ENCODE measurements at regions of chr15 and their contacts with region 1.

Region 1: DNA sequence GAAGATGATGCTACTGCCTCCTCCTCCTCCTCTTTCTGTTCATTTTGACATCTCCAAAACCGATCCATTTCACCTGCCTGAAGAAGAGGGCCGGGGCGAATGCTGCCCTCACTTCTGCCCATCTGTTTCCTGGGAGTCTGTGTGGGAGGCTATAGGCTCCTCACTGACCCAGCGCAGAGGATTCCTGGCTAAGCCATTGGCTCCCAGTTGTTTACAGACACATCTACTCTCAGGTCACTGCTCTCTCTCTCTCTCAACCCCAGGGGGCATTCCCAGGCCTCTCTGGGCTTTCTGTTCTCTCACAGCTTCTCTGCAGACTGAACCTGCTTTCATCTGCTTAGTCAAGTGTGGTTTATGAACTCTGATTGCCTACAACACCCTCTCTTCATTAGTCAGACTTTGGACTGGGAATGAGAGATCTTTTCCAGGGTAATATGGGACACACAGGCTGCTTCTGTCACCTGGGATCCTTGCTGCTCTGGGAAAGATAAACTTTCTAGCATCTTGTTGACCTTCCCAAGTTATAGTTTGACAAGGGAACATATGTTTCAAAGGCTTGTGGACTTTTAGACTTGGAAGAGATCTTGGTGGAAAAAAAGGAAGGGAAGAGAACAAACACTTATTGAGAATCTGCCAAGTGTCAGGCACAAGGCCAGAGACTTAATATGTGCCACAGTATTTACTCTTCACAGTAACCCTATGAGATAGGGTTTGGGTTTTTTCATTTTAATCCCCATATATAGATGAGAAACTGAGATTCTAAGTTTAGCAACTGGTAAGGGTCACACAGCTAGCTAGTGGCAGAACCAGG is 30.2 kb upstream of the USP3 start:
- DNase-seq: peak in 32 of 35 experiments; percentile 28 to 78 (median 46)
- ATAC-seq: peak; percentile 73 to 80 (median 78)
- H3K4me3 ChIP-seq: no peak overlapping the region
- H3K4me3 Mint-ChIP-seq: peak overlapping the region; percentile 4 to 56 (median 13)
- H3K27ac ChIP-seq: peak overlapping the region; percentile 63
- H3K27ac Mint-ChIP-seq: peak overlapping the region; percentile 95
- H3K4me1 ChIP-seq: peaks cover 27 to 38% of the 10 kb centered on the region in 2 experiments
- H3K4me1 Mint-ChIP-seq: peaks cover 65 to 69% (median 68%) of the 10 kb centered on the region in 3 donors
- H3K27me3 ChIP-seq: no peaks in the 10 kb centered on the region
- H3K27me3 Mint-ChIP-seq: no peaks in the 10 kb centered on the region

Region 2: GRCh38 chr15:63255489-63255990 is 218.7 kb before region 1 on chr15:
- CTCF ChIA-PET with region 1: no interaction called
- POLR2A ChIA-PET with region 1: interaction called in 1 of 2 experiments, 11 read pairs
- DNase-seq: no peak
- ATAC-seq: no peak
- H3K4me3 ChIP-seq: no peak overlapping the region
- H3K4me3 Mint-ChIP-seq: no peak overlapping the region
- H3K27ac ChIP-seq: no peak overlapping the region
- H3K27ac Mint-ChIP-seq: peak overlapping the region; percentile 69 to 86
- H3K4me1 ChIP-seq: no peaks in the 10 kb centered on the region
- H3K4me1 Mint-ChIP-seq: peaks cover 13 to 20% (median 16%) of the 10 kb centered on the region in 3 donors
- H3K27me3 ChIP-seq: no peaks in the 10 kb centered on the region
- H3K27me3 Mint-ChIP-seq: no peaks in the 10 kb centered on the region

Region 3: DNA sequence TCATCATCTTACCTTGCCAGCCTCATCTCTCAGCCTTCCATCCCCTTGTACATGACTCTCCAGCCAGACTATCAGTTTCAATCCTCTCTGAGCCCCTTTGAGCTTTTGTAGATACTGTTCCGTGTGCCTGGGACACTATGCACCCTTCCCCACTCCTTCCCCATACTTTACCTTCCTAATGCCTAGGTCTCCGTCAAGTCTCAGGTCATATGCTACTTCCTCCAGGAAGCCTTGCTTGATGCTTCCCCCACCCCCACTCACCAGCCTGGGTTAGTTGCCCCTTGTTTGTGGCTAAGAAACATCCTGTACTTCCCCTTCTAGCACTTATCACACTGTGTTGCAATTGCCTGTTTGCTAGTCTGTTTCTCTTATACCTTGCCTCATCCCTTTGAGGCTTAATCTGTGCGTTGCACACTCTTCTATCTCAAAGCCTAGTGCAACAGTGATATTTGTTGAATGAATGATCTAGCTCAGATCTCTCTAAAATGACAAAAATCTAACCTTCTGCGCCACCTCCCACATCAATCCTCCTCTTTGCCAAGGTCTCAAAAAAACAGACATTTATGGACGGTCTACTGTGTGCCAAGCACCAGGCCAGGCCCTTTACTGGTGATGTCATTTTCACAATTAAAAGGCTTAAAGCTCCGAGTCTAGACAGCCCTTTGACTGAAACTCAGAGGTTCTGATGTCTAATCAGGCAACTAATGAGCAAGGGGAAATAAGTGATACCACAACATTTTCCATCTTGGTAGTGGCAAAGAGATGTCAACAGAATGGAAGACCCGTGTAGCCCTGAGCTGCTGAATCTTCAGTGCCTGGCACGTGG is 23.7 kb after region 1 on chr15:
- CTCF ChIA-PET with region 1: interaction called in 1 of 2 experiments, 10 read pairs
- POLR2A ChIA-PET with region 1: interaction called, 7 to 11 read pairs
- DNase-seq: peak; percentile 59 to 90 (median 79)
- ATAC-seq: peak; percentile 77 to 85 (median 82)
- H3K4me3 ChIP-seq: peak overlapping the region; percentile 27 to 36
- H3K4me3 Mint-ChIP-seq: no peak overlapping the region
- H3K27ac ChIP-seq: peak overlapping the region; percentile 99
- H3K27ac Mint-ChIP-seq: no peak overlapping the region
- H3K4me1 ChIP-seq: peaks cover 69 to 88% of the 10 kb centered on the region in 2 experiments
- H3K4me1 Mint-ChIP-seq: peaks cover 50 to 82% (median 58%) of the 10 kb centered on the region in 3 donors
- H3K27me3 ChIP-seq: no peaks in the 10 kb centered on the region
- H3K27me3 Mint-ChIP-seq: no peaks in the 10 kb centered on the region

Region 4: GRCh38 chr15:63504247-63504978 is 30.2 kb after region 1 on chr15 and contains the start of gene USP3:
- CTCF ChIA-PET with region 1: interaction called in 1 of 2 experiments, 4 read pairs
- POLR2A ChIA-PET with region 1: interaction called, 3 to 37 read pairs
- DNase-seq: peak; percentile 84 to 96 (median 91)
- ATAC-seq: peak; percentile 71 to 85 (median 75)
- H3K4me3 ChIP-seq: peak within 1 kb of the TSS; percentile 84 to 99
- H3K4me3 Mint-ChIP-seq: peak within 1 kb of the TSS; percentile 94 to 99 (median 96)
- H3K27ac ChIP-seq: peak within 1 kb of the TSS; percentile 99
- H3K27ac Mint-ChIP-seq: peak within 1 kb of the TSS; percentile 99
- H3K4me1 ChIP-seq: peaks cover 43 to 69% of the 10 kb centered on the region in 2 experiments
- H3K4me1 Mint-ChIP-seq: peaks cover 74 to 75% (median 75%) of the 10 kb centered on the region in 3 donors
- H3K27me3 ChIP-seq: no peaks in the 10 kb centered on the region
- H3K27me3 Mint-ChIP-seq: no peaks in the 10 kb centered on the region
- total RNA-seq, gene USP3: 123 to 265 (median 130) TPM

Measured in T-cell (primary cell).